PC-3 (cell line): ENCODE measurements at regions of chr5 and their contacts with region 1.

Region 1: DNA sequence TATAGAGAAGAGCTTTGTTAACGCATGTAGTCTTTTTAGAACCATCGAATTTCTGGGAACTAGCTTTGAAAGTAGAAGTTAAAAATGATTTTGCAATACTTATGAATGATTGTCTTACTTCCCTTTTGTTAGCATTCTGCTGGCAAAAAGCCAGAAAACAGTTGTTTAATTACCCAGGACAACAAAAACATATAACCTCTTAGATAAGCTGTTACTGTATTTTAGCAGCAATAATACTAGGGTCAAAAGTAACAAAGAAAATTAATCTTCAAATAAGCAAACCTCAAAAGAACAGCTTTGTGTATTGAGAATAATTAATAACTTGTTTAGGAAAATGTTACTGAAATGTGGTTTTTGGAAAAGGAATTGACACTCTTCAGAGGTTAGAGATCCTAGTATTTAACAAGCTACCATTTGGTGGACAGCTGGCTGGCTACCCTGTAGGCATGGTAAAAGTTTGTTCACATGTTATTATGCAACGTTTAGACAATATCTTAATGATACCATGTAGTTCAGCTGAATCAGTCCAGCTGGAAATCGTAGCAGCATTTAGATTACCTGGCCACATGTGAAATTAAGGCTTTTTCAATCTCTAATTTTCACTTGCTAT is 3.8 kb downstream of the FGF10 start:
- DNase-seq: no peak
- ATAC-seq: no peak
- H3K4me3 ChIP-seq: no peak overlapping the region
- H3K27ac ChIP-seq: no peak overlapping the region
- H3K4me1 ChIP-seq: no peaks in the 10 kb centered on the region
- H3K27me3 ChIP-seq: peaks cover 54% of the 10 kb centered on the region
- CTCF ChIP-seq: no peak

Region 2: GRCh38 chr5:44870430-44870829 is 485.0 kb after region 1 on chr5:
- CTCF ChIA-PET with region 1: interaction called, 15 read pairs
- POLR2A ChIA-PET with region 1: no interaction called
- intact Hi-C with region 1: no loop called
- DNase-seq: no peak
- ATAC-seq: no peak
- H3K4me3 ChIP-seq: no peak overlapping the region
- H3K27ac ChIP-seq: no peak overlapping the region
- H3K4me1 ChIP-seq: peaks cover 16% of the 10 kb centered on the region
- H3K27me3 ChIP-seq: no peaks in the 10 kb centered on the region
- CTCF ChIP-seq: no peak